ENCODE measurements at regions of chr18 and their contacts with region 1.

Region 1: DNA sequence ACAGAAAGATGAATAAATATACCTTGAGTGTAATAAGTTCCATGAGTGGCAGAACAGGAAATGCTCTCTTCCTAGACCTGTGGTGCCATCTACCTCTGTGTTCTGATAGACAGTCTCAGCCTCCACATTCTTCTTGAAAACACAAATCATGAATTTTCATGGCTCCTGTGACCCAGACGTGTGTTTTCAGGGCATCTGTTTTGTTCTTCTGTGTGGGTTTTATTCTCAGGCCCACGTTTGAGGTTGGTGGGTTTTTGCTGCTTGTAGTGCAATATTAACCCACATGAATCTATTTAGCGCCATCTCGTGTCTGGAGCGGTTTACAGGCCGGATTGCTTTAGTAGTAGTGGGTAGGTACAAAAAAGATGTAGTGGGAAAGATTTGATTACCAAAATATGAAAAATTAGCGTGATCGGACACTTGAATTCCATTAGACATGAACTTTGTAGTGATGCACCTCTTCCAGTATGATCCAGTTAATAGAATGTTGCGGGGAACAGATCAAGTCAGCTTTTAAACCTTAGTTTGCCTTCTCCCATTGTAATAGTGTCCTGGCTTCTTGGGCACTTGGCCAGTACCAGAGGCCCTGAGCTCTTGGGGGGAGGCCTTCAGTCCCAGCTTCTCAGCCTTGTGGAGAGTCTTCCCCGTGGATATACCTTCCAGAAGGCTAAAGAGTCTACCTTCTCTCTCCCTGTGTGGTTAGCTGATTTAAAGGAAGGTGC is 256.5 kb downstream of the TPGS2 start:
- DNase-seq: peak; percentile 39
- H3K4me3 Mint-ChIP-seq: no peak overlapping the region
- H3K27ac Mint-ChIP-seq: no peak overlapping the region
- H3K4me1 Mint-ChIP-seq: no peaks in the 10 kb centered on the region
- H3K27me3 Mint-ChIP-seq: peaks cover 4% of the 10 kb centered on the region
- CTCF ChIP-seq: peak; percentile 47

Region 2: DNA sequence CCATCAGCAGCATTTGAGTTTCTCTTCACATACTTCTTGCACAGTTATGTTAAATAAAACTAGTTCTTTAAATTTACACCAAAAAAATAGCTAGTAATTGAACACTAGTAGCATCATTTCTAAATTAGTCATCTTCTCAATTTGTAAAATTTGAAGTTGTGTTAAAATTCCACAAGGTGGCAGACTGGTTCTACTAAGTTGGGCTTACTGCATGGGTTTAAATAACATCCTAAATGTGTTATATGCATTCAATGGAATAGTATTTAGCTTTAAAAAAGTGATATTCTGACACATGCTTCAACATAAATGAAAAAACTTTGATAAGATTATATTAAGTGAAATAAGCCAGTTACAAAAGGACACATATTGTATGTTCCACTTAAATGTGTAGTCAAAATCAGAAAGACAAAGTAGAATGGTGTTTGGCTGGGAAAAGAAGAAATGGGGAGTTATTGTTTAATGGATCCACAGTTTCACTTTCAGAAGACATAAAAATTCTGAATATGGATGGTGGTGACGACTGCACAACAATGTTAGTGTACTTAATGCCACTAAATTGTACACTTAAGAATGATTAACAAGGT is 476.3 kb before region 1 on chr18:
- CTCF ChIA-PET with region 1: interaction called, 4 read pairs
- intact Hi-C with region 1: loop called (anchors 1 kb)
- DNase-seq: peak; percentile 5
- H3K4me3 Mint-ChIP-seq: no peak overlapping the region
- H3K27ac Mint-ChIP-seq: no peak overlapping the region
- H3K4me1 Mint-ChIP-seq: no peaks in the 10 kb centered on the region
- H3K27me3 Mint-ChIP-seq: no peaks in the 10 kb centered on the region
- CTCF ChIP-seq: peak; percentile 29

Region 3: DNA sequence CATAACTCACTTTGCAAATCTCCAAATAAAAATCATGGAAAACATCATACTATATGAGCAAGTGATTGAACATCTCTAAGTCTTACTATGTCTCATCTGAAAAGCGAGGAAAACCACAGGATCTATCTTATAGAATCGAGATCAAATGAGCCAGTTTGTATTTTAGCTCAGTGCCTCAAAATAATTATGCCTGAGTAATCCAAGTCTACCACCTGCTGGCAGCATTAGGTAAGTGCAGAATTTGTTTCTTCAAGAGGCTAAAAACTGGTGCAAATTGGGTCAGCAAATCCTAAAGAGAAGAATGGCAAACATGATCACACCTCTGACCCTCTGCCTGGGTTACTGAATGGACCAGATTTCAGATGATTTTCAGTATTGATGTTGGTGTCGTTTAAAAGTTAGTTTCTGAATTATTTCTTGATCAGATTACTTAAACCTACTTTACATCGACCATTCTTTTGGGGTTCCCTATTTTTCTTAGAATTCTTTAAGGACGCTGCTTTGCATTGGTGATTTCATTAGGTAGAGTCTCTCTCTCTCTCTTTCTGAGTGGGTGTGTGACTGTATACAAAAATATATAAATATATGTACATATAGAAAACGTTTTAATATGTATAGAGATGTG is 287.5 kb before region 1 on chr18:
- CTCF ChIA-PET with region 1: no interaction called
- intact Hi-C with region 1: loop called (anchors 1 kb)
- DNase-seq: peak; percentile 45
- H3K4me3 Mint-ChIP-seq: no peak overlapping the region
- H3K27ac Mint-ChIP-seq: no peak overlapping the region
- H3K4me1 Mint-ChIP-seq: no peaks in the 10 kb centered on the region
- H3K27me3 Mint-ChIP-seq: peaks cover 17% of the 10 kb centered on the region
- CTCF ChIP-seq: peak; percentile 65

Region 4: GRCh38 chr18:36296650-36297416 is 275.5 kb before region 1 on chr18:
- CTCF ChIA-PET with region 1: no interaction called
- intact Hi-C with region 1: loop called (anchors 2 kb)
- DNase-seq: peak; percentile 83
- H3K4me3 Mint-ChIP-seq: no peak overlapping the region
- H3K27ac Mint-ChIP-seq: no peak overlapping the region
- H3K4me1 Mint-ChIP-seq: no peaks in the 10 kb centered on the region
- H3K27me3 Mint-ChIP-seq: peaks cover 11% of the 10 kb centered on the region
- CTCF ChIP-seq: no peak

Region 5: DNA sequence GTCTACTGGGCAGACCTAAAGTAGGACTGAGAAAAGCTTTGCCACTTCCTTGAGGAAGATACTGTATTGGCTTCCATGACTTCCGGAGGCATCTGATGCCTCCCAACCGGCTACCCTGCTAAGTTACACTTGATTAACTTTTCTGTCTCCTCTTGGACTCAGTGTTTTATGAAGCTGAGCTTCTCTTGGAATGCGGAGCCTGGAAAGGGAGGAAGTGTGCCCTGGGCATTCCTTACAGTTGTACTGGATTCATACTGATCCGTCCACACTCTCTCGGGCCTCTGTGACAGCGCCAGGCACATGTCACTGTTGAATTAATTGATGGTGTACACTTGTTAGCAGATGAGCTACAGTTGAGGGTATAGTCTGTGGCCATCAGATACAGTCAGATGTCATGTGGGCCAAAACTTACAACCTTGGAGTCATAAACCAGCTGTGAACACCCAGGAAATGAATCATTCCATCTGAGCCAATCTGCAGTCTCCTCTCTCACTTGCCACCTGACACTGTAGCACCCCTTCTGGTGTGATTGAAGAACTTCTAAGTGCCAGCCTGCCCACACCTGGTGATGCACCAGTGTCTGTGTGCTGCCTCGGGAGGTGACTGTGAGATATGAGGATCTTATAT is 152.3 kb before region 1 on chr18:
- CTCF ChIA-PET with region 1: no interaction called
- intact Hi-C with region 1: loop called (anchors 5 kb)
- DNase-seq: peak; percentile 17
- H3K4me3 Mint-ChIP-seq: no peak overlapping the region
- H3K27ac Mint-ChIP-seq: no peak overlapping the region
- H3K4me1 Mint-ChIP-seq: peaks cover 12% of the 10 kb centered on the region
- H3K27me3 Mint-ChIP-seq: no peaks in the 10 kb centered on the region
- CTCF ChIP-seq: peak; percentile 46

Region 6: GRCh38 chr18:36661999-36662398 is 89.7 kb after region 1 on chr18:
- CTCF ChIA-PET with region 1: no interaction called
- intact Hi-C with region 1: no loop called
- DNase-seq: peak; percentile 6
- H3K4me3 Mint-ChIP-seq: no peak overlapping the region
- H3K27ac Mint-ChIP-seq: no peak overlapping the region
- H3K4me1 Mint-ChIP-seq: no peaks in the 10 kb centered on the region
- H3K27me3 Mint-ChIP-seq: no peaks in the 10 kb centered on the region
- CTCF ChIP-seq: no peak

Region 7: GRCh38 chr18:36757081-36757480 is 184.8 kb after region 1 on chr18:
- CTCF ChIA-PET with region 1: no interaction called
- intact Hi-C with region 1: loop called (anchors 5 kb)
- DNase-seq: peak; percentile 38
- H3K4me3 Mint-ChIP-seq: no peak overlapping the region
- H3K27ac Mint-ChIP-seq: no peak overlapping the region
- H3K4me1 Mint-ChIP-seq: peaks cover 12% of the 10 kb centered on the region
- H3K27me3 Mint-ChIP-seq: no peaks in the 10 kb centered on the region
- CTCF ChIP-seq: peak; percentile 48

Measured in Calu3 (cell line).